ENCODE measurements at regions of chr4 and their contacts with region 1.

Region 1: DNA sequence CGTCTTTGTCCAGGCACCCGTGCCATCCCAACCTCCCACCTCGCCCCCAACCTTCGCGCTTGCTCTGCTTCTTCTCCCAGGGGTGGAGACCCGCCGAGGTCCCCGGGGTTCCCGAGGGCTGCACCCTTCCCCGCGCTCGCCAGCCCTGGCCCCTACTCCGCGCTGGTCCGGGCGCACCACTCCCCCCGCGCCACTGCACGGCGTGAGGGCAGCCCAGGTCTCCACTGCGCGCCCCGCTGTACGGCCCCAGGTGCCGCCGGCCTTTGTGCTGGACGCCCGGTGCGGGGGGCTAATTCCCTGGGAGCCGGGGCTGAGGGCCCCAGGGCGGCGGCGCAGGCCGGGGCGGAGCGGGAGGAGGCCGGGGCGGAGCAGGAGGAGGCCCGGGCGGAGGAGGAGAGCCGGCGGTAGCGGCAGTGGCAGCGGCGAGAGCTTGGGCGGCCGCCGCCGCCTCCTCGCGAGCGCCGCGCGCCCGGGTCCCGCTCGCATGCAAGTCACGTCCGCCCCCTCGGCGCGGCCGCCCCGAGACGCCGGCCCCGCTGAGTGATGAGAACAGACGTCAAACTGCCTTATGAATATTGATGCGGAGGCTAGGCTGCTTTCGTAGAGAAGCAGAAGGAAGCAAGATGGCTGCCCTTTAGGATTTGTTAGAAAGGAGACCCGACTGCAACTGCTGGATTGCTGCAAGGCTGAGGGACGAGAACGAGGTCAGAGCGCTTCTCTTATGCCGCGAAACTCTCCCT is at the start of gene TET2:
- DNase-seq: peak; percentile 90
- H3K4me3 ChIP-seq: peak within 1 kb of the TSS; percentile 79 to 100 (median 100)
- H3K27ac ChIP-seq: peak within 1 kb of the TSS; percentile 98
- H3K4me1 ChIP-seq: peaks cover 23% of the 10 kb centered on the region
- H3K27me3 ChIP-seq: no peaks in the 10 kb centered on the region
- CTCF ChIP-seq: no peak
- POLR2A ChIP-seq: peak; percentile 72
- total RNA-seq, gene TET2: 17.5 and 19.8 TPM in 2 replicates

Region 2: DNA sequence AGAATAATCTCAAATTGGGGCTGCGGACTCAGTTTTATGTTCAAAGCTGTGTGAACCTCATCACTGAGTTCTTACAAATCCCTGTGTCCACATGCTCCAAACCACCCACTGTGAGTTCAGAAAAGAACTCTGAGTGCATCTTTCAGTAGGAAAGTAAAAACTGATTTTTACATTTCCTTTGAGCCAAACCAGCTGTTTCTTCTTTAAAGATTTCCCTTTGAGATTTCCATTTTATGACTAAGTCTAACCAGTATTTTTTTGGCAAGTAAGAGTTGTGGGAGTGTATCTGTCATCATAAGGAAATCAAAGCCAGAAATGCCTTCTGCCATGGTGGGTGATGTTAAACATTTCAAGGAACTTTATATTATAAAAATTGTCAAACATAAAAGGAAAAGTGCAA is 100.3 kb after region 1 on chr4:
- CTCF ChIA-PET with region 1: no interaction called
- POLR2A ChIA-PET with region 1: no interaction called
- dilution Hi-C with region 1: no loop called
- intact Hi-C with region 1: loop called (anchors 10 kb)
- DNase-seq: no peak
- H3K4me3 ChIP-seq: no peak overlapping the region
- H3K27ac ChIP-seq: no peak overlapping the region
- H3K4me1 ChIP-seq: peaks cover 3% of the 10 kb centered on the region
- H3K27me3 ChIP-seq: no peaks in the 10 kb centered on the region
- CTCF ChIP-seq: no peak
- POLR2A ChIP-seq: no peak

Region 3: GRCh38 chr4:105289368-105289767 is 142.9 kb after region 1 on chr4:
- CTCF ChIA-PET with region 1: no interaction called
- POLR2A ChIA-PET with region 1: no interaction called
- dilution Hi-C with region 1: no loop called
- intact Hi-C with region 1: loop called (anchors 5 kb)
- DNase-seq: no peak
- H3K4me3 ChIP-seq: no peak overlapping the region
- H3K27ac ChIP-seq: no peak overlapping the region
- H3K4me1 ChIP-seq: no peaks in the 10 kb centered on the region
- H3K27me3 ChIP-seq: no peaks in the 10 kb centered on the region
- CTCF ChIP-seq: no peak
- POLR2A ChIP-seq: no peak

Region 4: DNA sequence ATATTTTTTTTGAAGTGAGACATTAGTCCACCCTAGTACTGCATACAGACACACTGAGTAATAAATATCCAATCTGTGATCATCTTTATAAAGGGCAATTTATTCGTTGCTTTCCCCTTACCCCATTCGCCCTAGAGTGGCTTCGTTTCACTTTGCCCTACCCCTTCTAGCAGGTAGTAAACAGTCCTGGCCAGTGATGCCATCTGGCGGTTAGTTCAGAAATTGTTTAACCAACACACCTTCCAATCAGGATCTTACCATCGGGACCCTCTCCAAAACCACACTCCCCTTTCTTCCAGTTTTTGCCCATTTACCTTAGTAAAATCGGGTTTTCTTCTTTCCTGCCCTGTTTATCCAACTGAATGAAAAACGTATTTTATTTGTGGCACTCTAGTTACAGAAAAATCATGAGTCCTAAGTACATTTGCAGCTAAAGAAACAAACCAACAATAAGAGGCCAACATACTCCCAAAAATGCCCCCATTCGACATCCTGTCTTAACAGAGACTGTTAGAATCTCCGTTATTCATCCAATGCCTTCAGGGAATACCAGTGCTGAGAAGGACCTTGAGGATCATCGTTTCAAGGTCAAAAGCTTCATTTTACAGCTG is 325.2 kb after region 1 on chr4:
- CTCF ChIA-PET with region 1: interaction called, 48 read pairs
- POLR2A ChIA-PET with region 1: interaction called, 3 read pairs
- dilution Hi-C with region 1: no loop called
- intact Hi-C with region 1: loop called (anchors 1 kb)
- DNase-seq: peak; percentile 81
- H3K4me3 ChIP-seq: peak overlapping the region in 1 of 3 experiments; percentile 35
- H3K27ac ChIP-seq: no peak overlapping the region
- H3K4me1 ChIP-seq: peaks cover 18% of the 10 kb centered on the region
- H3K27me3 ChIP-seq: no peaks in the 10 kb centered on the region
- CTCF ChIP-seq: peak; percentile 57 to 70
- POLR2A ChIP-seq: no peak